ENCODE measurements at regions of chr15 and their contacts with region 1.

Region 1: GRCh38 chr15:79184465-79184892 is 93.9 kb upstream of the RASGRF1 start:
- DNase-seq: peak; percentile 39 to 80
- ATAC-seq: peak; percentile 46

Region 2: DNA sequence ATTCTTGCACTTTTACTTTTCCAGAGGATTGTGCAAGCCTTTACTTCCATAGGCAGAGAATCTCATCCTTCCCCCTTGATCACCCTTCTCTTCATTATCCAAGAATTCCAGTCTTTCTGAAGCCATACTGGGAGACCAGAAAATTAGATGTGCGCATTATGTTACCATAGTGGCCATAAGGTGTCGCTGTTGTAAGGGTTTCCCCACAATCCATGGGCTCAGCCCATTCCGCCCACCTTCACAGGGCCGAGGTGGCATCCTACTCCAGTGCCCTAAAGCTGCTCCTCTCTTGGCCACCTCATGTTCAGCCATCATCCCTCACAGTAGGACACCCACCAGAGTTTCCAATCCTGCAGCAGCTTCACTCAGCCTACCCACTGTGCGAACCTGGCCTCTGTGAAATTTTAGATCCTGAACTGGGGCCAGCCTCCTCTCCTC is 274.7 kb before region 1 on chr15:
- intact Hi-C with region 1: loop called in 1 of 2 experiments (anchors 10 kb)
- DNase-seq: no peak
- ATAC-seq: peak; percentile 58

Region 3: GRCh38 chr15:79028411-79028964 is 156.0 kb before region 1 on chr15:
- intact Hi-C with region 1: loop called (anchors 2 to 10 kb)
- DNase-seq: peak in 1 of 2 donors; percentile 22
- ATAC-seq: no peak

Measured in left colon (tissue), 2 donors.